ENCODE measurements at regions of chr17 and their contacts with region 1.

Region 1: DNA sequence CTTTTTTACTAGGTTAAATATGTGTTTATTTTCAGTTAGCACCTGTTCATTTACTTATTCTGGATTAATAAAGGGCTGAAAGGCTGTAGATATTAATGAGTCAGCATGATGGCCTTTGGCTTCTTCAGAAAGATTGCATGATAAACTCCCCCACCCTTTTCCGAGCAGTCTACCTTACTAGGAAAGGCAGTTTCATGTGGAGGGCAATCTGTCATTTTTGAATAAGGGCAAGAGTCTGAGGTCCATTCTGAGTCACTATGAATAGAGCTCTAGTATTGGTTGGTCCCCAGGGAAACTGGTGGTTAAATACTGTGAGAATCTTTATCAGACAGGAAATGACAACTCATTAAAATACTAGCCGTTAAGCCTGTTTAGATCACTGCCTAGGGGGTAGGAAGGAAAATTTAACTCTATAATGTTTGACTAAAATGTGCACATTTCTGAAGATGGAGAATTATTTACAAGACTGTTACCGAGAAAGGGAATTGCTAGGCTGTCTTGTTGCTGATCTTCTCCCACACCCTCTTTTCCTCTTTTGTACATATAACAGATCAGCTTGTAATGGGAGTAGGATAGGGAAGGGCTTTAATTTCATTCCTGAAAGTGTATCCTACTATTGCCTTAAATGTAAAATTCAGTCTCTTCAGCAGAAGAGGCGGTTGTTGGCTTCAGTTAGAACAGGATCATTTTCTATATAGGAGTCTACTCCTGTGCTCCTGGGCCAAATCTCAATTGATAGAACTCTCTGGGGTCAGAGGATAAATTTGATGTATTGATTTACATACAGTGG is 63.3 kb downstream of the TUBD1 start:
- DNase-seq: no peak
- ATAC-seq: peak; percentile 88
- H3K4me3 Mint-ChIP-seq: peak overlapping the region; percentile 81
- H3K27ac Mint-ChIP-seq: peak overlapping the region; percentile 88
- H3K4me1 Mint-ChIP-seq: peaks cover 80% of the 10 kb centered on the region
- H3K27me3 Mint-ChIP-seq: no peaks in the 10 kb centered on the region
- CTCF ChIP-seq: no peak

Region 2: DNA sequence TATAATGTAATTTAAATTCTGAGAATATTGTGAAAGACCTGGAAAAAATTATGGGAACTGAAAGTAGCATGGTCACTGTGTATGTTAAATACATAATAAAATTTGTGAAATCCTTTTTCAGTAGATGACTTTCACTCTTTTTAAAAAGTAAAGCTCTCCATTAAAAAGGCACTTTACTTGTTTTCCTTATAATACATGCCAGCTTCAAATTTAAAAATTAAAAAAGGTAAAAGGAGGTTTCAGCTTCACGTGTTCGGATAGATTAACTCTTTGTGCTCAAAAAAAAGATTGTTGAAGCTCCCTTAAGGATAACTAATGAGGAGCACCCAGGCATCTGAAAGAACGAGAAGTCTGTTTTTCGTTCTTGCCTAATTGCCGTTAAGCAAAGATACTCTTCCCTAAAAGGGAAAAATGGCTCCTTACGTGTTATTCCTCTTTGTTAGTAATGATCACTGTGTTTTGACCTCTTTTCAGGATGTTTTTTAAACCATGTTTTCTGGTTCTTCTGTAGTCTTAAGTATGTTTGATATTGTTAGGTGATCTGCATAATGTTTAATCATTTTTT is 24.4 kb before region 1 on chr17:
- CTCF ChIA-PET with region 1: no interaction called
- POLR2A ChIA-PET with region 1: interaction called, 5 read pairs
- intact Hi-C with region 1: loop called (anchors 2 kb)
- DNase-seq: no peak
- ATAC-seq: no peak
- H3K4me3 Mint-ChIP-seq: peak overlapping the region; percentile 71
- H3K27ac Mint-ChIP-seq: peak overlapping the region; percentile 76
- H3K4me1 Mint-ChIP-seq: peaks cover 11% of the 10 kb centered on the region
- H3K27me3 Mint-ChIP-seq: no peaks in the 10 kb centered on the region
- CTCF ChIP-seq: no peak

Region 3: DNA sequence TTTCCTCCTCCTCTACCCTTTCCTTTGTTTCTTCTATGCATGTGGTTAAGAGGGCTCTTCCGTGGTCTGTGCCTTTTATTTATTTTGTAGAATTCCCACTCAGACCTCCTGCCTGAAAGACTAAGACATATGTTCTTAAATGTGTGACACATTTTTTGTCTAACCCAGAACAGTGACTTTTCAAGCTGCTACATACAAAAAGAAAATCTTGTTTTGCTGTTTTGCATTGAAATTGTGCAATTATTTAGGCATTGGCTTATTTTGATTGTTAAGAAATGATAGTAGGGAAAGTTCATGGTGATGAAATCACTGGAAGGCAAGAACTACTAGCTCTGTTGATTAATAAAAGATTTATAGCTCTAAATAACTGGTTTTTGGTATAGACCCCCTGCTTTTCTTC is 13.4 kb before region 1 on chr17:
- CTCF ChIA-PET with region 1: interaction called, 3 read pairs
- POLR2A ChIA-PET with region 1: interaction called, 8 read pairs
- intact Hi-C with region 1: loop called (anchors 2 kb)
- DNase-seq: no peak
- ATAC-seq: no peak
- H3K4me3 Mint-ChIP-seq: no peak overlapping the region
- H3K27ac Mint-ChIP-seq: no peak overlapping the region
- H3K4me1 Mint-ChIP-seq: peaks cover 9% of the 10 kb centered on the region
- H3K27me3 Mint-ChIP-seq: no peaks in the 10 kb centered on the region
- CTCF ChIP-seq: no peak

Region 4: DNA sequence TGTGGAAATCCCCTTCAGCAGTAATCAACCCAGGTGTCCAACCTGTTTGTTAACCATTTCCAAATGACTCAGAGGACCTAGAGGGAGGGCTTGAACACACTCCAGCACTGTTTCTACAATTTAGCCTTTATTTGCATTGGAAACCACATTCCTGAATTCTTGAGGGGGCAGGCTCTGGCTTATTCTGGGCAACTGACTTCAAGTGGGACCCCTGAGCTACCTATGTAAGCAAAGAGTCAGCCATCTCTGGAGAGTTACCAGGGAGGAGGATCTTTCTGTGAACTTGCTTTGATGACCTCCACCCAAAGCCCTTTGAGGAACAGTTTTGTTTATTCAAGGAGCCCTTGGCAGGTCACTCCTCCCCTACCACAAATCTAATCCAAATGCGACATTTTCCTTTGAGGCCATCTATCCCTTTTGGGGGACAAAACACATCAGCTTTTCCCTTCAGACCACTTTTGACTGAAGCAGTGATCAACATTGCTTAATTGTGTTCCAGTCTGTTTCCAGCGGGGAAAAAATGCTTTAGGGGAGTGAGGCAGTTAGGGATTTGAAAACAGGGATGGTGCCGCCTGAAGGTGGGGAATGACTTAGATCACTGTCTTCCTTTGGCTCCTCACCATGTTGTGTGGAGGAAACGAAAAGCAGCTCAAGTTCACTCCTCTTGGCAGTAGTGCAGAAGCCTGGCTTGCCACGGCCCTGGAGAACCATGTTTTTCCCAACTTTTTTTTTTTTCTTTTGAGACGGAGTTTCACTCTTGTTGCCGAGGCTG is 17.2 kb after region 1 on chr17:
- CTCF ChIA-PET with region 1: interaction called, 3 read pairs
- POLR2A ChIA-PET with region 1: no interaction called
- intact Hi-C with region 1: loop called (anchors 1 kb)
- DNase-seq: peak; percentile 33
- ATAC-seq: peak; percentile 67
- H3K4me3 Mint-ChIP-seq: peak overlapping the region; percentile 50
- H3K27ac Mint-ChIP-seq: peak overlapping the region; percentile 92
- H3K4me1 Mint-ChIP-seq: peaks cover 75% of the 10 kb centered on the region
- H3K27me3 Mint-ChIP-seq: no peaks in the 10 kb centered on the region
- CTCF ChIP-seq: no peak